ENCODE measurements at regions of chr4 and their contacts with region 1.

Region 1: GRCh38 chr4:89482248-89482647 is 174.6 kb upstream of the GPRIN3 start:
- DNase-seq: peak; percentile 33
- H3K4me3 ChIP-seq: no peak overlapping the region
- H3K27ac ChIP-seq: no peak overlapping the region
- H3K4me1 ChIP-seq: no peaks in the 10 kb centered on the region
- H3K27me3 ChIP-seq: no peaks in the 10 kb centered on the region
- CTCF ChIP-seq: peak; percentile 39; the same call in 1 of the 2 replicates

Region 2: GRCh38 chr4:89514811-89515210 is 32.6 kb after region 1 on chr4:
- CTCF ChIA-PET with region 1: no interaction called
- POLR2A ChIA-PET with region 1: no interaction called
- intact Hi-C with region 1: no loop called
- DNase-seq: no peak
- H3K4me3 ChIP-seq: no peak overlapping the region
- H3K27ac ChIP-seq: no peak overlapping the region
- H3K4me1 ChIP-seq: no peaks in the 10 kb centered on the region
- H3K27me3 ChIP-seq: no peaks in the 10 kb centered on the region
- CTCF ChIP-seq: no peak

Region 3: DNA sequence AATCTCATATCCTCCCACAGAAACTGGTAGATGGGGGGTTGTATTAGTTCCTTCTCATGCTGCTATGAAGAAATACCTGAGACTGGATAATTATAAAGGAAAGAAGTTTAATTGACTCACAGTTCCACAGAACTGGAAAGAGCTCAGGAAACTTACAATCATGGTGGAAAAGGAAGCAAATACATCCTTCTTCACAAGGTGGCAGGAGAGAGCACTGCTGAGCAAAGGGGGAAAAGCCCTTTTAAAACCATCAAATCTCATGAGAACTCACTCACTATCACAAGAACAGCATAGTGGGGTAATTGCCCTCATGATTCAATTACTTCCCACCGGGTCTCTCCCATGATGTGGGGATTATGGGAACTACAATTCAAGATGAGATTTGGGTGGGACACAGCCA is 75.9 kb after region 1 on chr4:
- CTCF ChIA-PET with region 1: no interaction called
- POLR2A ChIA-PET with region 1: no interaction called
- intact Hi-C with region 1: no loop called
- DNase-seq: peak; percentile 28
- H3K4me3 ChIP-seq: no peak overlapping the region
- H3K27ac ChIP-seq: no peak overlapping the region
- H3K4me1 ChIP-seq: no peaks in the 10 kb centered on the region
- H3K27me3 ChIP-seq: no peaks in the 10 kb centered on the region
- CTCF ChIP-seq: peak; percentile 47

Region 4: DNA sequence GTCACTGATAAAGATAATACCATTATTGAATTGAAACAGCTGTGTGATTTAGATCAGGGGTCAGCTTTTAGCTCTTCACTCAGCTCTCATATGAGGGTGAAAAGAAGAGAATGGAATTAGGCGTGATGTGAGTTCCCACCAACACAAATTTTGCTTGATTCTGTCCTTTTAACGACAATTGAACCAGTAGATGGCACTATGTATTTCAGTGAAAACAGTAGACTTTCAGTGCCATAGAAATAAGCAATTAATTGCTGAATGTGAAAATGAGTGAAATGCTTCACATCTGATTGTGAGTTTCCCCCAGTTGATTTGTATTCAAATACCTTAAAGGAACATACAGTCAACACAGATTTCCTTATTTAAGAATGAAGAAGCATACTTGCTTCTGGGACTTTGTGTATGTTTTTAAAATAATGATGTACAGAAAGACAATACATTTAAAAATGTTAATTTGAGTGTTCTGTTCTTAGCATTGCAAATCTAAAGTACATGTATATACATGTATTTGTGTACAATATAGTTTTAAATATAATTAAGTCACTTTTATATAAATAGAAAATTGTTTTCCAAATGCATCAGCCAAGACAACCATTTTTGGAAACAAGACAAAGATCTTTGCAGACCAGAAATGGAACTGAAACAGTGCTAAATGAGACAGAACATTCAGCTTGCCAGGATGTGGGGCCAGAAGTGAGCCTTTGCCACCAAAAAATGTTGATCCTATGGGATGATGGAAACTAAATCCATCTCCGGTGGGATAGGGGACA is 175.9 kb after region 1 on chr4:
- CTCF ChIA-PET with region 1: no interaction called
- POLR2A ChIA-PET with region 1: no interaction called
- intact Hi-C with region 1: loop called (anchors 10 kb)
- DNase-seq: peak; percentile 10
- H3K4me3 ChIP-seq: no peak overlapping the region
- H3K27ac ChIP-seq: no peak overlapping the region
- H3K4me1 ChIP-seq: no peaks in the 10 kb centered on the region
- H3K27me3 ChIP-seq: no peaks in the 10 kb centered on the region
- CTCF ChIP-seq: peak; percentile 39; the same call in 1 of the 2 replicates

Region 5: DNA sequence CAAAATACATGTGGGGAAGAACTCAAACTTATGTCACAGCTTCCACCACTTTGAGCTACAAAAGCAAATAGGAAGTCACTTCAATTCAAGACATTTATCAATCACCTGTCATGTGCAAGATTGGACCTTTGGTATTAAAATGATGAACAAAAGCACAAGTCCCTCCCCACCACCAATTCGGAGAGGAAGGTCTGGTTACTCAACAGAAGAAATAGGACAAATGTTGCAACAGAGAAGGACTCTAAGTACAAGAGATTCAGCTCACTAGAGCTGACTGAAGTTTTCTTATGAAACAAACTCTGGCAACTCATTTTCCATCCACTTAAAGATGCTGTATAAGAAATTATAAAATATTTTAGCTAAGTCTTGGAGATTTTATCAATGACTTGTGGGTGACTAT is 396.4 kb after region 1 on chr4:
- CTCF ChIA-PET with region 1: no interaction called
- POLR2A ChIA-PET with region 1: no interaction called
- intact Hi-C with region 1: loop called (anchors 10 kb)
- DNase-seq: no peak
- H3K4me3 ChIP-seq: no peak overlapping the region
- H3K27ac ChIP-seq: no peak overlapping the region
- H3K4me1 ChIP-seq: no peaks in the 10 kb centered on the region
- H3K27me3 ChIP-seq: no peaks in the 10 kb centered on the region
- CTCF ChIP-seq: no peak